Activated CD4-positive, alpha-beta T cell treated with anti-CD3 and anti-CD28 coated beads for 36 hours (primary cell): ENCODE measurements at regions of chr19 and their contacts with region 1.

Region 1: DNA sequence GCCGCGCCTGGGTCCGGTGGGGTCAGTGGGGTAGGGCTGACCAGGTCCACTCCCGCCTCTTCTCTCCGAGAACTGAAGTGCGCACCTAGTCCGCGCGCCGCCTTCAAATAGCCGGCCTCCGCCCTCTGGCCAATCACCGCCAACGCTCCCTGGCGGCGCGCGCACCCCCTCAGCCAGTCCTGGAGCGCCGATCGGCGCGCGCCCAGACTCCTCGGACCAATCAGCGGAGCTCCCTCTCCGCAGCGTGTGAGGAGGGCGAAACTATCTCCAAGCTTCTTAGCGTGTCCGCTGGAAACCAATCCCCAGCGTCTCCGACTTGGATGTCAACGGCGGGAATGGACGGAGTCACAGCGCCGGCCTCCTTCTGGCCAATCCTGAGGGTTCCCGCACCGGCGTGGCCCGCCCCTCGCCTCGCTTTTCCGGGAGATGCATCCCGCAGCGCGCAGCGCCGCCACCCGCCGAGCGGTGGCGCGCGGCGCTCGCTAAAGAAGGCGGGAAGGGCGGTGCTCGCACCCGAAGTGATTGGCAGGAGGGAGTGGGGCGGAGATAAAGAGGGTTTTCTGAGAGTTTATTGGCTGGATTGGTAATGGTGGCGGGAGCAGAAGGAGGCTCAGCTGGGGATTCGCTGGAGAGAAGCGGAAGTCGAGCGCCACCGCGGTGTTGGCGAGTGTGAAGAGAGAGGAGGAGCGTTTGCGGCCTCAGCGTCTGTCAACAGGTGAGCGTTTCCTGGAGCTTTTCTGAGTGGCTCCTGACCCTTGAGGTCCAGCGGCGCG is at the start of gene ASF1B:
- DNase-seq: peak; percentile 99
- ATAC-seq: peak; percentile 88
- H3K4me3 Mint-ChIP-seq: peak within 1 kb of the TSS; percentile 88
- H3K27ac Mint-ChIP-seq: peak within 1 kb of the TSS; percentile 93
- H3K4me1 Mint-ChIP-seq: peaks cover 43% of the 10 kb centered on the region
- H3K27me3 Mint-ChIP-seq: no peaks in the 10 kb centered on the region
- total RNA-seq, gene ASF1B: 64.6 to 70.4 TPM

Region 2: DNA sequence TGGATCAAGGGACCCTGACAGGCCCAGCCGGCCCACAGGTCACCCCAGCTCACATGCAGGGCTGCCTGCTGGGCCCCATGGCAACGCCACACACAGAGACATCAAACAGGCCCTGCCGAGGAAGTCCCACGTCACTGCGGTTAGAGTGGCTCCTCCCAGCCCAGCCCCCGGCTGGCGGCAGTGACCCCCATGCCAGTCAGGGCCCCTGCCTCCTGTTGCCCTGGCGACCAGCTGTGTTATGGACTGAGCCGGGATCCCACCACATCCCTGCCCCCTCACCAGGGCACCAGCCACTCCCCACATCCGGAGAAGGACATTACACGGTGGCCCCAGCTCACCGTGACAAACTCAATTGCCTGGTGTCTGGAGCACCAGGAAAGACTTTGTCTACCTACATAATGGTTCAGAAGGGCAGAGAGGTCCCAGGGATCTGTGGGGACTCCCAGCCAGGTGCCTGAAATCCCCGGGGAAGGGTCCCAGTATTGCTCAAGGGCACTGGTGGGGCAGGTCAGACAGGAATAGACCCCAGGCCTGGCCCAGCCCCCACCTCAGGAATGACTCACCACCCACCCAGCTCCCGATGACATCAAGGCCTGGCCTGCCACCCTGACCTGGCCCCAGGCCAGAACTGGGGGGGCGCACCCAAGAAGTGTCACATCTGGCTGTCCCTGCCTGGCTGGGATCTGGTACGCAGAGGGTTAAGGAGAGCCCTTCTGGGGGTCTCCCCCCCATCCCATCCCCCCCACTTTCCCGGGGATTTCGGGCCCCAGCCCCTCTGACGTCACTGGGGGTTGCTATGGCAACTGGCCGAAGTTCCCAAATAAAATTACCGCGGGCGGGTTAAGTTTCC is 289.9 kb before region 1 on chr19:
- CTCF ChIA-PET with region 1: no interaction called
- POLR2A ChIA-PET with region 1: no interaction called
- intact Hi-C with region 1: loop called in 1 of 2 experiments (anchors 1 kb)
- DNase-seq: peak; percentile 97
- ATAC-seq: peak; percentile 69
- H3K4me3 Mint-ChIP-seq: peak overlapping the region; percentile 71
- H3K27ac Mint-ChIP-seq: peak overlapping the region; percentile 97
- H3K4me1 Mint-ChIP-seq: peaks cover 56% of the 10 kb centered on the region
- H3K27me3 Mint-ChIP-seq: no peaks in the 10 kb centered on the region

Region 3: DNA sequence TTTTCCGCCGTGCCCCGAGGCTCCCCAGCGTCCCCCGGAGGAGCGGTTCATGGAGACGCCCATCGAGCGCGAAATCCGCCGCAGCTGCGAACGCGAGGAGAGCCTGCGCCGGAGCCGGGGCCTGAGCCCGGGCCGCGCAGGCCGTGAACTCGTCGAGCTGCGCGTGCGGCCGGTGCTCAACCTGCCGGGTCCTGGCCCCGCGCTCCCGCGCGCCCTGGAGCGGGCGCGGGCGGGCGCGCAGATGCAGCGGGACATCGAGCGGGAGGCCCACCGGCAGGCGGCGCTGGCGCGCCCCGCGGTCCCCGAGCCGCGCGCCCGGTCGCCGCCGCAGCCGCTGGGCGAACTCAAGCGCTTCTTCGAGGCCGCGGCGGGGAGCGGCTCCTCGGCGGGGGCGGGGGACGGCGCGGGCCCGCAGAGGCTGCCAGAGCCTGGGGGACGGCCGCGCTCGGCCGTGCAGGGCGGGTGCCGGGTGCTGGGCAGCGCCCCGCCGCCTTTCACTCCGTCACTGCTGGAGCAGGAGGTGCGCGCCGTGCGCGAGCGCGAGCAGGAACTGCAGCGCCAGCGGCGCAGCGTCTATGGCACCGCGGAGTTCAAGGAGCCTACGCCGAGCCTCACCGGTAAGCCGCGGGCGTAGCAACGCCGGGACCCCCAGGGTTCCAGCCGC is 63.3 kb before region 1 on chr19:
- CTCF ChIA-PET with region 1: interaction called, 9 read pairs
- POLR2A ChIA-PET with region 1: no interaction called
- intact Hi-C with region 1: loop called in 1 of 2 experiments (anchors 2 kb)
- DNase-seq: peak; percentile 87
- ATAC-seq: peak; percentile 74
- H3K4me3 Mint-ChIP-seq: peak overlapping the region; percentile 87
- H3K27ac Mint-ChIP-seq: peak overlapping the region; percentile 80
- H3K4me1 Mint-ChIP-seq: peaks cover 21% of the 10 kb centered on the region
- H3K27me3 Mint-ChIP-seq: peaks cover 2% of the 10 kb centered on the region

Region 4: DNA sequence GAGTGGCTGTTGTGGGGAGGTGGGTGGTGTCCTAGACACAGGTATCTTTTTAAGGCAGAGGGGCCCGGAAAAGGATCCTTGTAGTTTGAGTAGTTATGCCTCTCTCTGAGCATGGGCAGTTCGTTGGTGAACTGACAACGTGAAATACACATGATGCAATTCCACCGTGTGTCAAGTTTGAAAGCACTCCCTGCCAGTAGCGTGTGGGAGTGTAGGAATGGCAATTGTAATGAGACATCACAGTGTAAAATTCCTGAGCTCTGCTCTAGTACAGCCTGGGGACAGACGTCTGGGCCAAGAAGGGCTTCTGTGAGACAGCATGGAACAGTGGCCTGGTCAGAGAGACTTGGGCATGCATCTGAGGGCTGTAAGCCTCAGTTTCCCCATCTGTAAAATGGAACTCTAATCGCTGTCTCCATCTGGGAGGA is 10.1 kb after region 1 on chr19:
- CTCF ChIA-PET with region 1: interaction called, 17 read pairs
- POLR2A ChIA-PET with region 1: interaction called, 4 read pairs
- intact Hi-C with region 1: no loop called
- DNase-seq: peak; percentile 7
- ATAC-seq: no peak
- H3K4me3 Mint-ChIP-seq: no peak overlapping the region
- H3K27ac Mint-ChIP-seq: peak overlapping the region; percentile 47
- H3K4me1 Mint-ChIP-seq: peaks cover 63% of the 10 kb centered on the region
- H3K27me3 Mint-ChIP-seq: no peaks in the 10 kb centered on the region

Region 5: DNA sequence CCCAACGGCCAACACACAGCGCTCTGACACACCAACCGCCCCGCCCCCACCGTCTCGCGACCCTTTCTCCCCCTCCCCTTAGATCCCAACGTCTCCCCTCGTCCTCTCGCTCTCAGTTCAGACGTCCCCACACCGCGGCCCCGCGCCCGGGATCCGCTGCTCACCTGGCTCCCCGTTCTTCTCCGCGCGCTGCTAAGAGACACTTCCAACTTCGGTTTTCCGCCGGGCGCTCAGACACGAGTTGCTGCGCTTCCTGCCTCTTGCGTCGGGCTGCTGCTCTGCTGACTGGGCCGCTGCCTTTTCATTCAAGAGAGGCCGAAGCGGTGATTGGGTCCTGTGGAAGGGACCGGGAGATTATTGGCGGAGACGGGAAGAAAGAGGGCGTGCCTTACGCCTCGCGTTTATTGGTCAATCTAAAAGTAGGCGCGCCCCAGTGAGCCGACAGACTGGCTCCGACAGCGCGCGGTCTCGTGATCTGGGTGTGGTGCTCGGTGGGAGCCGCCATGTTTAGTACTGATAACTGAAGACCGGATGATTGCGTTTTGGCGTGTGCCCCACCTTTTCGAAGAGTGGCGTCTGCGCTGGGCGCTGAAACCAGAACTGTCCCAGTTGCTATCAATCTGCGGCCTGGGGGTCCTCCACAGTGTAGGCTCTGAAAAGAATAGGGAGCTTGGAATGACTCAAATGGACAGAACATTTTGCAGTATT is 282.6 kb after region 1 on chr19 and contains the start of gene DDX39A:
- CTCF ChIA-PET with region 1: no interaction called
- POLR2A ChIA-PET with region 1: interaction called, 4 read pairs
- intact Hi-C with region 1: loop called (anchors 1 to 2 kb)
- DNase-seq: peak; percentile 99
- ATAC-seq: peak; percentile 95
- H3K4me3 Mint-ChIP-seq: peak within 1 kb of the TSS; percentile 82
- H3K27ac Mint-ChIP-seq: peak within 1 kb of the TSS; percentile 92
- H3K4me1 Mint-ChIP-seq: peaks cover 29% of the 10 kb centered on the region
- H3K27me3 Mint-ChIP-seq: no peaks in the 10 kb centered on the region
- total RNA-seq, gene DDX39A: 168 to 185 TPM

Region 6: GRCh38 chr19:14529254-14530004 is 392.7 kb after region 1 on chr19 and contains the start of gene TECR:
- CTCF ChIA-PET with region 1: no interaction called
- POLR2A ChIA-PET with region 1: no interaction called
- intact Hi-C with region 1: loop called in 1 of 2 experiments (anchors 1 kb)
- DNase-seq: peak; percentile 100
- ATAC-seq: peak; percentile 98
- H3K4me3 Mint-ChIP-seq: peak within 1 kb of the TSS; percentile 83
- H3K27ac Mint-ChIP-seq: peak within 1 kb of the TSS; percentile 90
- H3K4me1 Mint-ChIP-seq: peaks cover 37% of the 10 kb centered on the region
- H3K27me3 Mint-ChIP-seq: no peaks in the 10 kb centered on the region
- total RNA-seq, gene TECR: 106 to 145 TPM